HepG2 (cell line): ENCODE measurements at regions of chr14 and their contacts with region 1.

Region 1: GRCh38 chr14:86799244-86799647 is 1193.7 kb downstream of the GALC start:
- DNase-seq: peak; percentile 72
- ATAC-seq: peak; percentile 31; the same call in 1 of the 3 replicates
- H3K4me3 ChIP-seq: no peak overlapping the region
- H3K27ac ChIP-seq: no peak overlapping the region
- H3K4me1 ChIP-seq: peaks cover 44% of the 10 kb centered on the region
- H3K27me3 ChIP-seq: no peaks in the 10 kb centered on the region
- CTCF ChIP-seq: no peak
- EP300 ChIP-seq: 0 out of 4 replicates have a peak, but pooled peaks of 1 of the 2 experiments have one; percentile 16
- POLR2A ChIP-seq: no peak
- RAD21 ChIP-seq: no peak

Region 2: DNA sequence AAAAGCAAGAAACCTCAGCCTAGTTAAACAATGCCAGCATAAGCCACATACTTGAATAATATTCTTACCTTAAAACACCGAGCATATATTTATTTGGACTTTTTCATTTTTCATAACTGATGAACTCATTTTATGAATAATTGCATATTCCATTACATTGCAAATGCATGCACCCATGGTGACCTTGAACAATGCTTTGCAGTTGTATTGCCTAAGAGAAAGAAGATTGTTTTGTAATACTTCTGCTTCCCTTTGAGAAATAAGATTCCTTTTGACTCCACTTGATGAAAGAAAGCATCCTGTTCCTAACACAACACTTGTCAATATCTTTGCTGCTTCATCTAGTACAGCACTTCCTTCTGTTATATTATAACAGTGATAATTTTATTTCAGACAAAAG is 87.1 kb before region 1 on chr14:
- CTCF ChIA-PET with region 1: no interaction called
- POLR2A ChIA-PET with region 1: no interaction called
- in situ Hi-C with region 1: no loop called
- intact Hi-C with region 1: loop called (anchors 2 kb)
- DNase-seq: peak; percentile 10
- ATAC-seq: no peak
- H3K4me3 ChIP-seq: no peak overlapping the region
- H3K27ac ChIP-seq: peak overlapping the region; percentile 38
- H3K4me1 ChIP-seq: peaks cover 69% of the 10 kb centered on the region
- H3K27me3 ChIP-seq: no peaks in the 10 kb centered on the region
- CTCF ChIP-seq: no peak
- EP300 ChIP-seq: peak in 1 of 2 experiments; percentile 32; a peak in 1 of 4 replicates
- POLR2A ChIP-seq: no peak
- RAD21 ChIP-seq: no peak

Region 3: DNA sequence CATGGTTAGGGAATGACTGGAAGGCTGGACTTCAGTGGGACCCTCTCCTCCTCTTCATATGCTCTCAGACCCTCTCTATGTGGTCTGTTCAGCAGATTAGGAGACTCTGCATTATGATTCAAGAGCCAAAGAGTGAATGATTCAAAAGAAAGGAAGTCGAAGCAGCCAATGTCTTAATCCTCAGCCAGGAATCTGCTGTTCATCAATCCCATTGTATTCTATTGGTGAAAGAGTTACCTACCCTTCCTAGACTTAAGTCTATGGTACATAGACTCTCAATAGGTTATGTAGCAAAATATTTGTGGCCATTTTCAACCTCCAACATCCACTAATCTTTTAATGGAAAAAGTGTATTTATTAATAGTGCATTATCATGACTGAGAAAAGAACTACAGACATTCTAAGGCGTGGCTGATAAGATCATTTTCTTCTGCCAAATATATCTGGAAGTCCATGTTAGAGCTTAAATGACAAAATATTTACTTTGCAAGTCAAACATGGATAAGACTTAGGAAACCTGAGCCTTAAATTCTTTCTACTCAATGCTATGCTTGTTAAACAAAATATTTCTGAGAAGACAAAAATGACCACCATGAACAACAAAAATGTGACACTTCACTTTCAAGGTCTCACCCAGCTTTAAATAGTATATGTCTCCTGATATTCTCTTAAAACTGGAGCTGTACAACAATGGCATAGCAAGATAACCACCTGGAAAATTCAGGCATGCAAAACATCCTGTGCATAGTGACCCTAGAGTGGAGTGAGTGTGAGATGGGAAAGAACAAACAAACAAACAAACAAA is 93.1 kb after region 1 on chr14:
- CTCF ChIA-PET with region 1: no interaction called
- POLR2A ChIA-PET with region 1: no interaction called
- in situ Hi-C with region 1: loop called (anchors 10 kb)
- intact Hi-C with region 1: loop called (anchors 5 kb)
- DNase-seq: peak; percentile 79
- ATAC-seq: peak; percentile 81
- H3K4me3 ChIP-seq: no peak overlapping the region
- H3K27ac ChIP-seq: peak overlapping the region; percentile 24
- H3K4me1 ChIP-seq: peaks cover 56% of the 10 kb centered on the region
- H3K27me3 ChIP-seq: no peaks in the 10 kb centered on the region
- CTCF ChIP-seq: no peak
- EP300 ChIP-seq: peak in 1 of 2 experiments; percentile 85; a peak in 2 of 4 replicates
- POLR2A ChIP-seq: no peak
- RAD21 ChIP-seq: no peak

Region 4: GRCh38 chr14:87087881-87088280 is 288.6 kb after region 1 on chr14:
- CTCF ChIA-PET with region 1: no interaction called
- POLR2A ChIA-PET with region 1: no interaction called
- in situ Hi-C with region 1: no loop called
- intact Hi-C with region 1: no loop called
- DNase-seq: no peak
- ATAC-seq: no peak
- H3K4me3 ChIP-seq: no peak overlapping the region
- H3K27ac ChIP-seq: no peak overlapping the region
- H3K4me1 ChIP-seq: no peaks in the 10 kb centered on the region
- H3K27me3 ChIP-seq: no peaks in the 10 kb centered on the region
- CTCF ChIP-seq: no peak
- EP300 ChIP-seq: no peak
- POLR2A ChIP-seq: no peak
- RAD21 ChIP-seq: no peak